ENCODE measurements at regions of chrX and their contacts with region 1.

Region 1: GRCh38 chrX:133792198-133792953 is 193.0 kb downstream of the GPC3 start:
- DNase-seq: peak; percentile 86
- H3K4me3 Mint-ChIP-seq: no peak overlapping the region
- H3K27ac Mint-ChIP-seq: no peak overlapping the region
- H3K4me1 Mint-ChIP-seq: no peaks in the 10 kb centered on the region
- H3K27me3 Mint-ChIP-seq: no peaks in the 10 kb centered on the region

Region 2: GRCh38 chrX:133980406-133981186 is 188.2 kb after region 1 on chrX:
- intact Hi-C with region 1: no loop called
- DNase-seq: no peak
- H3K4me3 Mint-ChIP-seq: no peak overlapping the region
- H3K27ac Mint-ChIP-seq: no peak overlapping the region
- H3K4me1 Mint-ChIP-seq: no peaks in the 10 kb centered on the region
- H3K27me3 Mint-ChIP-seq: peaks cover 28% of the 10 kb centered on the region

Region 3: GRCh38 chrX:134026565-134027311 is 234.4 kb after region 1 on chrX:
- intact Hi-C with region 1: loop called (anchors 1 kb)
- DNase-seq: peak; percentile 79
- H3K4me3 Mint-ChIP-seq: peak overlapping the region; percentile 60
- H3K27ac Mint-ChIP-seq: no peak overlapping the region
- H3K4me1 Mint-ChIP-seq: peaks cover 7% of the 10 kb centered on the region
- H3K27me3 Mint-ChIP-seq: no peaks in the 10 kb centered on the region

Region 4: GRCh38 chrX:134144231-134144630 is 351.9 kb after region 1 on chrX:
- intact Hi-C with region 1: loop called (anchors 10 kb)
- DNase-seq: peak; percentile 73
- H3K4me3 Mint-ChIP-seq: no peak overlapping the region
- H3K27ac Mint-ChIP-seq: no peak overlapping the region
- H3K4me1 Mint-ChIP-seq: peaks cover 3% of the 10 kb centered on the region
- H3K27me3 Mint-ChIP-seq: peaks cover 4% of the 10 kb centered on the region

Region 5: DNA sequence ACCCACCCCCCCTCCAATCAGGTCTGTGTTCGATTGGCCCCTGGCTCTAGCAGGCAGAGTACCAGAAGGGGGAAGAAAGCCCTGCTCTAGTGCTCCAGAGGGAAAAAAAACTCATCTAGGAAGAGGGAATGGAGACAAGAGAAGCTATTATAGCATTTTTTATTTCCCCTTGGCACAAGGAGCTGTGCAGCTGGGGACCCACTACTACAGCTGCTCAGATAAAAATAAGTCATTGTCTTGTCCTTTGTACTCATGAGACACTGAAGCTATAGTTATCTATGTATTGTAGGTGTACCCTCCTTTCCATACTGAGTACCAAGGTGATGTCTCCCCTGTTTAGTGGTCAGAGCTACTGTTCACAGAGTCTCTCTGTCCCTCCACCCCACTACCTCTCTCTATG is 458.9 kb after region 1 on chrX:
- intact Hi-C with region 1: loop called (anchors 10 kb)
- DNase-seq: no peak
- H3K4me3 Mint-ChIP-seq: no peak overlapping the region
- H3K27ac Mint-ChIP-seq: no peak overlapping the region
- H3K4me1 Mint-ChIP-seq: peaks cover 5% of the 10 kb centered on the region
- H3K27me3 Mint-ChIP-seq: no peaks in the 10 kb centered on the region

Region 6: GRCh38 chrX:134396174-134396573 is 603.8 kb after region 1 on chrX:
- intact Hi-C with region 1: loop called (anchors 5 kb)
- DNase-seq: no peak
- H3K4me3 Mint-ChIP-seq: no peak overlapping the region
- H3K27ac Mint-ChIP-seq: no peak overlapping the region
- H3K4me1 Mint-ChIP-seq: peaks cover 4% of the 10 kb centered on the region
- H3K27me3 Mint-ChIP-seq: no peaks in the 10 kb centered on the region

Measured in activated CD4-positive, alpha-beta T cell treated with anti-CD3 and anti-CD28 coated beads, Interleukin-2, amount 10 ng/mL, durations not matched to agents 24 days and 14 days (primary cell).